ENCODE measurements at regions of chr19 and their contacts with region 1.

Region 1: GRCh38 chr19:57389730-57390598 is at the start of gene ZNF548:
- DNase-seq: peak; percentile 85 to 99 (median 92)
- ATAC-seq: peak; percentile 98
- H3K4me3 ChIP-seq: peak within 1 kb of the TSS; percentile 72
- H3K4me3 Mint-ChIP-seq: peak within 1 kb of the TSS; percentile 89 to 100 (median 97)
- H3K27ac ChIP-seq: peak within 1 kb of the TSS; percentile 93
- H3K27ac Mint-ChIP-seq: peak within 1 kb of the TSS; percentile 91 to 100 (median 97)
- H3K4me1 ChIP-seq: peaks cover 13 to 15% of the 10 kb centered on the region in 2 donors
- H3K4me1 Mint-ChIP-seq: peaks cover 11 to 45% (median 29%) of the 10 kb centered on the region in 7 donors
- H3K27me3 ChIP-seq: no peaks in the 10 kb centered on the region
- H3K27me3 Mint-ChIP-seq: no peaks in the 10 kb centered on the region
- total RNA-seq, gene ZNF548: 26.4 to 115 (median 66.9) TPM

Region 2: GRCh38 chr19:57320180-57321084 is 69.5 kb before region 1 on chr19 and contains the start of gene ZNF543:
- CTCF ChIA-PET with region 1: no interaction called
- POLR2A ChIA-PET with region 1: no interaction called
- intact Hi-C with region 1: loop called in 1 of 2 experiments (anchors 1 kb)
- DNase-seq: peak; percentile 78 to 90 (median 84)
- ATAC-seq: peak; percentile 98
- H3K4me3 ChIP-seq: peak within 1 kb of the TSS; percentile 76
- H3K4me3 Mint-ChIP-seq: peak within 1 kb of the TSS; percentile 87 to 98 (median 94)
- H3K27ac ChIP-seq: peak within 1 kb of the TSS; percentile 83
- H3K27ac Mint-ChIP-seq: peak within 1 kb of the TSS; percentile 82 to 98 (median 96)
- H3K4me1 ChIP-seq: peaks cover 0 to 18% of the 10 kb centered on the region in 2 donors
- H3K4me1 Mint-ChIP-seq: peaks cover 14 to 30% (median 25%) of the 10 kb centered on the region in 7 donors
- H3K27me3 ChIP-seq: peaks cover 0 to 6% of the 10 kb centered on the region in 2 donors
- H3K27me3 Mint-ChIP-seq: peaks cover 20 to 31% (median 24%) of the 10 kb centered on the region in 5 donors
- total RNA-seq, gene ZNF543: 3.6 to 9.0 (median 8.0) TPM

Region 3: GRCh38 chr19:57477191-57478008 is 87.4 kb after region 1 on chr19 and contains the start of gene ZNF772:
- CTCF ChIA-PET with region 1: no interaction called
- POLR2A ChIA-PET with region 1: interaction called, 3 read pairs
- intact Hi-C with region 1: loop called in 1 of 2 experiments (anchors 1 kb)
- DNase-seq: peak; percentile 55 to 96 (median 88)
- ATAC-seq: peak; percentile 99
- H3K4me3 ChIP-seq: peak within 1 kb of the TSS; percentile 80
- H3K4me3 Mint-ChIP-seq: peak within 1 kb of the TSS; percentile 87 to 95 (median 92)
- H3K27ac ChIP-seq: peak within 1 kb of the TSS; percentile 77
- H3K27ac Mint-ChIP-seq: peak within 1 kb of the TSS; percentile 84 to 96 (median 89)
- H3K4me1 ChIP-seq: peaks cover 5 to 12% of the 10 kb centered on the region in 2 donors
- H3K4me1 Mint-ChIP-seq: peaks cover 10 to 26% (median 19%) of the 10 kb centered on the region in 7 donors
- H3K27me3 ChIP-seq: no peaks in the 10 kb centered on the region
- H3K27me3 Mint-ChIP-seq: peaks cover 0 to 7% (median 0%) of the 10 kb centered on the region in 5 donors
- total RNA-seq, gene ZNF772: 1.5 to 20.5 (median 4.3) TPM

Region 4: DNA sequence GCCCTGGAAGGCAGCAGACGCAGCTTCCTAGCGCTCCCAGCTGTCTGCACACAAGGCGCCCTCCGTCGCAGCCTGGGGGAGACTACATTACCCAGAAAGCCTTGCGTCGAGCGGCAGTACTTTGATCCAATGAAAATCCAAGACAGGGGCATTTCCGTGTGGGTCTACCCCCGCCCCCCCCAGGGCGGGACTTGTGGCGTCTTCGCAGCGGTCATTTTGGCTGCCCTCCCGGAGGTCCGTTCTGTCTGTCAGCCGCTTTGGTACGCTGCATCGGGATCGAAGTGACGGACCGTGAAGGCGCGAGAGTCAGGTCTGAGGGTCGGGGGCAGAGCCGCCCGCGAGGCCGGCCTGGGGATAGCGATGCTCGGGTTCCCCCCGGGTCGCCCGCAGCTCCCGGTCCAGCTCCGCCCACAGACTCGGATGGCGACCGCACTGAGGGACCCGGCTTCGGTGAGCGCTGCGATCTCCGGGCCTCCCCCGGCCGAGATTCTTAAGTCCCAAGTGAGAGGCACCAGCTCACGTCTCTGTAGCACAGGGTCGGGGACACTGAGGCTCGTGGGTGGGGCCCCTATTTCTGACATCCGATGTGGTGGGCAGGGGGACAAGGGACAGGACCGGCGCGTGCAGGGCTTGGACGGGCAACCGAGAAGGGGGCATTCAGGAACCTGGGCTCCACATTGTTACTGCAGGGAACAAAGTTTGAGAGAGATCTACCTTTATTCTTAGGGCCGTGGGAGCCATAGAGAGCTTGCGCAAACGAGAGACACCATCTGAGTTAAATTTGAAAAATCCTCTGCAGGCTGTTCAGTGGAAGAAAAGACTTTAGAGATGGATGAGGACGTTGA is 243.2 kb after region 1 on chr19 and contains the start of gene ZNF211:
- CTCF ChIA-PET with region 1: no interaction called
- POLR2A ChIA-PET with region 1: no interaction called
- intact Hi-C with region 1: loop called in 1 of 2 experiments (anchors 2 kb)
- DNase-seq: peak; percentile 74 to 89 (median 86)
- ATAC-seq: peak; percentile 100
- H3K4me3 ChIP-seq: peak within 1 kb of the TSS; percentile 87
- H3K4me3 Mint-ChIP-seq: peak within 1 kb of the TSS; percentile 87 to 97 (median 94)
- H3K27ac ChIP-seq: peak within 1 kb of the TSS; percentile 90
- H3K27ac Mint-ChIP-seq: peak within 1 kb of the TSS; percentile 81 to 97 (median 89)
- H3K4me1 ChIP-seq: peaks cover 3 to 13% of the 10 kb centered on the region in 2 donors
- H3K4me1 Mint-ChIP-seq: peaks cover 21 to 36% (median 28%) of the 10 kb centered on the region in 7 donors
- H3K27me3 ChIP-seq: no peaks in the 10 kb centered on the region
- H3K27me3 Mint-ChIP-seq: no peaks in the 10 kb centered on the region
- total RNA-seq, gene ZNF211: 18.0 to 56.7 (median 33.7) TPM

Region 5: DNA sequence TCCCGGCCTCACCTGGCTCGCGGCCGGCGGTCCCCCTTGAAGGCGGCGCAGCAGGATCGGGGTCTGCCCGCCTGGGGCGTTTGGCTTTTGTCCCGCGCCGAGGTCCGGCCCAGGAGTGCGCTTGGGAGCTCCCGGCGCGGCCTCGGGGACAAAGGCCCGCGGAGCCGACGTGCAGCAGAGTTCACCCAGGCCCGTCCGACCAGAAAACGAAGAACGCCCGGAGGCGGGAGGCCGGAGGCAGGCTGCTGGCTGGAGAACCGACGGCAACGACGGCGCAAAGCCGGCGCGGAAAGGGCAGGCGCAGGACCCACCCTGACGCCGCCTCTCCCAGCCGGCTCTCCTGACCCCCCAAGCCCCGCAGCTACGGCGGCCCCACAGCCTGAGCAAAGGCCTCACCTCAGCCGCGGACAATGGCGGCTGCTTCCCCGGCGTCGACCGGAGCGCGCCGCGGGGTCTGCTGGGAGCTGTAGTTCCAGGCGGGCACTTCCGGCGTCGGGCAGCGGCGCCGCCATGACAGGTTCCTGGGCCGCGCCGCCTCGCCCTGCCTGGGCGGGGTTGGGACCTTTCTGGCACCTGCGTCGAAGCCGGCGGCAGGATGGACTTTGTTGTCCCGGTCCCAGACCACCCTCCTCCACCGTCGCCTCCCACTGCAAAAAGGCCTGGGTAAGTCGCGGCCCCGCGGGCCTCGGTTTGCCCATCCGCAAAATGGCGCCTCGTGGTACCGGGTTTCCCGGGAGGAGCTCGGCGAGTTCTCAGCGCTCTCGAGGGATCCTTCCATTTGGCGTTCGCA is 612.6 kb after region 1 on chr19 and contains the start of gene ZNF606:
- CTCF ChIA-PET with region 1: no interaction called
- POLR2A ChIA-PET with region 1: interaction called, 3 read pairs
- intact Hi-C with region 1: loop called in 1 of 2 experiments (anchors 1 kb)
- DNase-seq: peak; percentile 79 to 87 (median 85)
- ATAC-seq: peak; percentile 100
- H3K4me3 ChIP-seq: peak within 1 kb of the TSS; percentile 91
- H3K4me3 Mint-ChIP-seq: peak within 1 kb of the TSS; percentile 80 to 90 (median 88)
- H3K27ac ChIP-seq: peak within 1 kb of the TSS; percentile 90
- H3K27ac Mint-ChIP-seq: peak within 1 kb of the TSS; percentile 79 to 94 (median 88)
- H3K4me1 ChIP-seq: peaks cover 14 to 18% of the 10 kb centered on the region in 2 donors
- H3K4me1 Mint-ChIP-seq: peaks cover 15 to 40% (median 27%) of the 10 kb centered on the region in 7 donors
- H3K27me3 ChIP-seq: no peaks in the 10 kb centered on the region
- H3K27me3 Mint-ChIP-seq: no peaks in the 10 kb centered on the region
- total RNA-seq, gene ZNF606: 11.9 to 37.5 (median 15.3) TPM